CD4-positive, alpha-beta T cell (primary cell): ENCODE measurements at regions of chr14 and their contacts with region 1.

Region 1: DNA sequence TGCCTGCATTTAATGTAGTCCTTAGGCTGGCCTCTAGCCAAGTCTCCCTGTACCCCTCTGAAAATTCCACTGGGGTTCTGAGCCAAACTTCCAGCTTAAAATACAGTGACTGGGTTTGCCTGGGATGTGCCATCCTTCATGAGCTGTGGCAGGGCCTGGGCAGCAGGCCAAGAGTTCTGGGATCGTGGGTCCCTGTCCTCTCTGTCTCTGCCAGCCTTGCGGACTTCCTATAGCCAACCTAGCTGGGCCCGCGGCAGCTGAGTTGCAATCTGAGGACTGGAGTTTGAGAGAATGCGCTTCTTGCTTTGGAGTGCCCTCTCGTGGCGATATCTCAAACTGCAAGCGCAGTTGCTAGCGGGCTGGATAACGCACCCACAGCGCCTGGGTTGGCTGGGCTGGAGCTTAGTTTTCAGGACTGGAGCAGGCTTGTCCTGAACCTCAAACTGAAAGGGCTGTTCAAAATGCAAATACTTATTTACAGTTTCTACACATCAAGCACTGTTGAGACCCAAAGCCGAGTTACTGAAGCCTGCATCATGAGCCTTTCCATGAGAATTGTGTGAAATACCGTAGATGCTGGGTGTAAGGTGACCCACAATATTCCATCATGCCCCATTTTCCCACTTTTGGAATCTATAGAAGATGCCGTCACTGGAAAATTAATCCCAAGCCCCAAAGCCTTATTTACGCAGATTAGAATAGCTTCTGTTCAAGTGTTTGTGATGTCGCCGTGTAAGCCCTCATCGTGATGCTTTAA is 7.3 kb upstream of the IFI27L2 start:
- DNase-seq: peak; percentile 70 to 90 (median 83)
- ATAC-seq: peak; percentile 95
- H3K4me3 ChIP-seq: no peak overlapping the region
- H3K4me3 Mint-ChIP-seq: no peak overlapping the region
- H3K27ac ChIP-seq: no peak overlapping the region
- H3K27ac Mint-ChIP-seq: no peak overlapping the region
- H3K4me1 ChIP-seq: peaks cover 4% of the 10 kb centered on the region
- H3K4me1 Mint-ChIP-seq: no peaks in the 10 kb centered on the region
- H3K27me3 ChIP-seq: peaks cover 0 to 3% of the 10 kb centered on the region in 2 experiments
- H3K27me3 Mint-ChIP-seq: peaks cover 10% of the 10 kb centered on the region
- CTCF ChIP-seq: peak; percentile 91

Region 2: GRCh38 chr14:94005324-94006073 is 131.3 kb before region 1 on chr14:
- CTCF ChIA-PET with region 1: no interaction called
- POLR2A ChIA-PET with region 1: no interaction called
- intact Hi-C with region 1: no loop called
- DNase-seq: peak in 4 of 14 experiments; percentile 16 to 46 (median 36)
- ATAC-seq: peak; percentile 52
- H3K4me3 ChIP-seq: no peak overlapping the region
- H3K4me3 Mint-ChIP-seq: no peak overlapping the region
- H3K27ac ChIP-seq: no peak overlapping the region
- H3K27ac Mint-ChIP-seq: no peak overlapping the region
- H3K4me1 ChIP-seq: peaks cover 37% of the 10 kb centered on the region
- H3K4me1 Mint-ChIP-seq: peaks cover 32% of the 10 kb centered on the region
- H3K27me3 ChIP-seq: peaks cover 0 to 4% of the 10 kb centered on the region in 2 experiments
- H3K27me3 Mint-ChIP-seq: peaks cover 18% of the 10 kb centered on the region
- CTCF ChIP-seq: no peak

Region 3: DNA sequence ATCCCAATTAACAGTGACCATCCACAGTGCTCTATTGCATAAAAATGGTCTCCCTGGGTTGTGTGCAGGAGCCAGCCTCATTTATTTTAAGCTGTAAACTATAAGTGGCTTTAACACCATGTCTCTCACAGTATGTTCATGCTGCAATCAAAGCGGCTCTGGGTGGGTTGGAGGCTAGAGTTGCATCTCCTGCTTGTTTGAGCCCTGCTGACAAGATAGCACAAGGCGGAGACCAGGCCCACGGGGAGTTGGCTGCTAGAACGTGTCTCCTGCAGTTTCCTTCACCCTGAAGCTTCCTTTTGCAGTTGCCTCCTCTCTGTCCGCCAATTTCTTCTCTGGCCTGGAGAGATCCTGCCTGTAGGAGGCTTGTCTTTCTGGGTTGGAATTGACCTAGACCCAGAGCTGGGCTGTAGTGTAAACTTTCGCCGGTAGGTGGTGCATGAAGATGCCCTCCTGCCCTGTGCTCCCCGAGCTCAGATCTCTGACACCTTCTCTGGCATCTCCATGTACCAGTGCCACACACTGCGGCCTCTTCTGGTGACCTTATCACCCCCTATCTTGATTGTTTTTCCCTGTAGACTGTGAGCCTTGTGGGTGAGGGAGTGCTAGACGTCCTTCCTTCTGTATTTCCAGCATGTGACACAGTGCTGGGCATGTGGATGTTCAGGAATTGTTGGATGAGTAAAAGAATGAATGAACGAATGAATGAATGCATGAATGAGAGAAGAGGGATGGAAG is 100.3 kb before region 1 on chr14:
- CTCF ChIA-PET with region 1: interaction called, 29 read pairs
- POLR2A ChIA-PET with region 1: interaction called, 4 read pairs
- intact Hi-C with region 1: loop called (anchors 1 kb)
- DNase-seq: peak; percentile 60 to 86 (median 70)
- ATAC-seq: peak; percentile 97
- H3K4me3 ChIP-seq: no peak overlapping the region
- H3K4me3 Mint-ChIP-seq: no peak overlapping the region
- H3K27ac ChIP-seq: no peak overlapping the region
- H3K27ac Mint-ChIP-seq: no peak overlapping the region
- H3K4me1 ChIP-seq: peaks cover 4% of the 10 kb centered on the region
- H3K4me1 Mint-ChIP-seq: peaks cover 4% of the 10 kb centered on the region
- H3K27me3 ChIP-seq: no peaks in the 10 kb centered on the region
- H3K27me3 Mint-ChIP-seq: no peaks in the 10 kb centered on the region
- CTCF ChIP-seq: peak; percentile 86

Region 4: DNA sequence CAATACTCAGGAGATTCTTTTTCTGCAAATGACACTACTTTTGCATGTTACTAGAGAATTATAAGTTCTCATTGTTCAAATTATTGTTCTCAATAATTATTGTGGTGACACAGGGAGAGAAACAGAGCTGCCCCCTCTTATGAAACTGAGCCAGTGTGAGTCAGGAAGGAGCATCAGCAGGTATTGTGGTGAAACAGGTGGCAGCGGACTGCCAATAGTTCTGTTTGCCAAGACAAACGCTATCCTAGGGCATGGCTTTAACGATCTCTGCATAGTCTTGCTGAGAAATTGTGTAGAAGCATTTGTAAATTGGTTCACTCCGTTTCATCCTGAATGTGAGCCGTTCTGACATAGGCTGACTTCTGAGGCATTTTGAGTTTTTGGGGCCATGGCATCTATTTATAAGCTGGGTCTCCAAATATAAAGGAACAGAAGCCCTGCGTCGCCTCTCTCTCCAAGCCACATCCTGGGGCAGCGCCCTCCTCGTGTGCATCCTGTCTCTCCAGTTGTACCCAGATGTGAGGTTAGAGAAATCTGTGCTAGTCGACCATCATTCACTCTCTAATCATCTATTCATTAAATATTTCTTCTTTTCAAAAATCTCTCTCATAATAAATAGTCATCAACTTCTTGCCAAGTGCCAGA is 21.6 kb after region 1 on chr14:
- CTCF ChIA-PET with region 1: interaction called, 9 read pairs
- POLR2A ChIA-PET with region 1: interaction called, 13 read pairs
- intact Hi-C with region 1: loop called in 1 of 2 experiments (anchors 2 kb)
- DNase-seq: peak in 10 of 14 experiments; percentile 8 to 82 (median 28)
- ATAC-seq: peak; percentile 81
- H3K4me3 ChIP-seq: no peak overlapping the region
- H3K4me3 Mint-ChIP-seq: peak overlapping the region; percentile 21
- H3K27ac ChIP-seq: no peak overlapping the region
- H3K27ac Mint-ChIP-seq: peak overlapping the region; percentile 67
- H3K4me1 ChIP-seq: peaks cover 47% of the 10 kb centered on the region
- H3K4me1 Mint-ChIP-seq: peaks cover 56% of the 10 kb centered on the region
- H3K27me3 ChIP-seq: peaks cover 0 to 3% of the 10 kb centered on the region in 2 experiments
- H3K27me3 Mint-ChIP-seq: no peaks in the 10 kb centered on the region
- CTCF ChIP-seq: no peak

Region 5: GRCh38 chr14:94173885-94174603 is 37.3 kb after region 1 on chr14 and contains the start of gene PPP4R4:
- CTCF ChIA-PET with region 1: interaction called, 45 read pairs
- POLR2A ChIA-PET with region 1: interaction called, 9 read pairs
- intact Hi-C with region 1: no loop called
- DNase-seq: peak; percentile 75 to 95 (median 88)
- ATAC-seq: peak; percentile 90
- H3K4me3 ChIP-seq: peak within 1 kb of the TSS; percentile 79
- H3K4me3 Mint-ChIP-seq: peak within 1 kb of the TSS; percentile 88
- H3K27ac ChIP-seq: no peak within 1 kb of the TSS
- H3K27ac Mint-ChIP-seq: peak within 1 kb of the TSS; percentile 11
- H3K4me1 ChIP-seq: peaks cover 23% of the 10 kb centered on the region
- H3K4me1 Mint-ChIP-seq: peaks cover 30% of the 10 kb centered on the region
- H3K27me3 ChIP-seq: peaks cover 4 to 7% of the 10 kb centered on the region in 2 experiments
- H3K27me3 Mint-ChIP-seq: peaks cover 7% of the 10 kb centered on the region
- CTCF ChIP-seq: no peak
- total RNA-seq, gene PPP4R4: 3.5 to 4.3 TPM

Region 6: DNA sequence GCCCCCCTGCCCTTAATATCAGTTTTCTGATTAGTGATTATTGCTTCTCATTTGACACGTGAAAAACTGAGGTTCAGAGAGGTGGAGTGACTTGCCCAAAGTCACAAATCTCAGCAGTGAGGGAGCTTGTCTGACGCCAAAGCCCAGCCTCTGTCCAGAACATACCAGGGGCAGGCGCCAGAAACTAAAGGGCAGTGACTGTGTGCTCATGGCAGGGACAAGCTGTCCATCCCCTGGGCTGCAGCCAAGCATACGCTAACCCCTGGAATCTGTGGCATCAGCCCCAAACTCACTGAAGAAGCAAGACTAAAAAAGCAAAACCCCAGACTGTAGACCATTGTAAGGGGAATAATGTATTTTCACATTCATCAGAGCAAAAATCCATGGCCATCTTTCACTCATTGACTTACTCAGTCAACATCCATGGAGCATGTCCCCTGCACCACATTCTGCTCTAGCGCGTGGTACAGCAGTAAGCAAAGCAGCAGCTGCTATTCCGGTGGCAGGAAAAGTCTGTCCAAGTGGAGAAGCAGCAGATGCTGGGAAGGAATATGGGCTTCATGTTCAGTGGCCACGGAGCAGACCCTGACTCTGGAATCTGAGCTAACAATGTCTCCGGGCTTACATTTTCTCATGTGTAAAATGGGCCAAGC is 423.0 kb after region 1 on chr14:
- CTCF ChIA-PET with region 1: no interaction called
- POLR2A ChIA-PET with region 1: no interaction called
- intact Hi-C with region 1: loop called in 1 of 2 experiments (anchors 10 kb)
- DNase-seq: no peak
- ATAC-seq: no peak
- H3K4me3 ChIP-seq: no peak overlapping the region
- H3K4me3 Mint-ChIP-seq: no peak overlapping the region
- H3K27ac ChIP-seq: no peak overlapping the region
- H3K27ac Mint-ChIP-seq: no peak overlapping the region
- H3K4me1 ChIP-seq: no peaks in the 10 kb centered on the region
- H3K4me1 Mint-ChIP-seq: no peaks in the 10 kb centered on the region
- H3K27me3 ChIP-seq: peaks cover 0 to 5% of the 10 kb centered on the region in 2 experiments
- H3K27me3 Mint-ChIP-seq: peaks cover 55% of the 10 kb centered on the region
- CTCF ChIP-seq: no peak